Caco-2 (cell line): ENCODE measurements at regions of chr15 and their contacts with region 1.

Region 1: DNA sequence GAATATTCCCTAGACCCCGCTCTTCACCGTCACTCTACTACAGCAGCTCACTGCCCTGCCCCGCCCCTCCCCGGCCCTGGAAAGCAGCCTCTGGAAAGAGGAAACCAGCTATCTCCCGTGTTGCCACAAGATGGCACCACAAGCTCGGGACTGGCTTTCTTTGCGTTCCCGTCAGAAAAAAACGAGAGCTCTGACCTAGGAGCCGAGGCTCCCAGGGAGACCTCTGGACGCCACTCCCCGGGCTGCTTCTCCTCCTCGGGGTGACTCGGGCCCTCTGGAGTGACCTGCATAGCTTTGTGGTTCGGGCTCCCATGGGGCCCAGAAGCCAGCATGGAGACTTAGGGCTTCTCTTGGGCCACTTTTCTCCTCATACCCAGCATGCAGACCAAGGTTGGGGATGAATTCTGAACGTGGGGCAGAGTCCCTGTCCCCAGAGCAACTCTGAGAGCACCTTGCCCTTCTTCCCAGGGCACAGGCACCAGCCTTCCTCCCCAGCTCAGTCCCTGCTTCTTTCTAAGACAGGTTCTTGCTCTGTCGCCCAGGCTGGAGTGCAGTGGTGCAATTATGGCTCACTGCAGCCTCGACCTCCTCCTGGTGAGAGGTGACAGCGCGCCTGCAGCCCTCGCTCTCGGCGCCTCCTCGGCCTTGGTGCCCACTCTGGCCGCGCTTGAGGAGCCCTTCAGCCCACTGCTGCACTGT is 19.0 kb downstream of the STOML1 start:
- DNase-seq: peak; percentile 82 to 87
- H3K4me3 ChIP-seq: no peak overlapping the region
- H3K4me3 Mint-ChIP-seq: peak overlapping the region; percentile 54
- H3K27ac Mint-ChIP-seq: peak overlapping the region; percentile 17
- H3K4me1 ChIP-seq: no peaks in the 10 kb centered on the region
- H3K4me1 Mint-ChIP-seq: peaks cover 8% of the 10 kb centered on the region
- H3K27me3 ChIP-seq: no peaks in the 10 kb centered on the region
- H3K27me3 Mint-ChIP-seq: peaks cover 19% of the 10 kb centered on the region
- CTCF ChIP-seq: peak; percentile 60 to 89

Region 2: GRCh38 chr15:73950831-73951561 is 22.1 kb before region 1 on chr15:
- CTCF ChIA-PET with region 1: interaction called, 32 read pairs
- POLR2A ChIA-PET with region 1: no interaction called
- intact Hi-C with region 1: no loop called
- DNase-seq: peak; percentile 80 to 84
- H3K4me3 ChIP-seq: no peak overlapping the region
- H3K4me3 Mint-ChIP-seq: no peak overlapping the region
- H3K27ac Mint-ChIP-seq: no peak overlapping the region
- H3K4me1 ChIP-seq: no peaks in the 10 kb centered on the region
- H3K4me1 Mint-ChIP-seq: peaks cover 6% of the 10 kb centered on the region
- H3K27me3 ChIP-seq: no peaks in the 10 kb centered on the region
- H3K27me3 Mint-ChIP-seq: no peaks in the 10 kb centered on the region
- CTCF ChIP-seq: peak; percentile 59 to 86

Region 3: DNA sequence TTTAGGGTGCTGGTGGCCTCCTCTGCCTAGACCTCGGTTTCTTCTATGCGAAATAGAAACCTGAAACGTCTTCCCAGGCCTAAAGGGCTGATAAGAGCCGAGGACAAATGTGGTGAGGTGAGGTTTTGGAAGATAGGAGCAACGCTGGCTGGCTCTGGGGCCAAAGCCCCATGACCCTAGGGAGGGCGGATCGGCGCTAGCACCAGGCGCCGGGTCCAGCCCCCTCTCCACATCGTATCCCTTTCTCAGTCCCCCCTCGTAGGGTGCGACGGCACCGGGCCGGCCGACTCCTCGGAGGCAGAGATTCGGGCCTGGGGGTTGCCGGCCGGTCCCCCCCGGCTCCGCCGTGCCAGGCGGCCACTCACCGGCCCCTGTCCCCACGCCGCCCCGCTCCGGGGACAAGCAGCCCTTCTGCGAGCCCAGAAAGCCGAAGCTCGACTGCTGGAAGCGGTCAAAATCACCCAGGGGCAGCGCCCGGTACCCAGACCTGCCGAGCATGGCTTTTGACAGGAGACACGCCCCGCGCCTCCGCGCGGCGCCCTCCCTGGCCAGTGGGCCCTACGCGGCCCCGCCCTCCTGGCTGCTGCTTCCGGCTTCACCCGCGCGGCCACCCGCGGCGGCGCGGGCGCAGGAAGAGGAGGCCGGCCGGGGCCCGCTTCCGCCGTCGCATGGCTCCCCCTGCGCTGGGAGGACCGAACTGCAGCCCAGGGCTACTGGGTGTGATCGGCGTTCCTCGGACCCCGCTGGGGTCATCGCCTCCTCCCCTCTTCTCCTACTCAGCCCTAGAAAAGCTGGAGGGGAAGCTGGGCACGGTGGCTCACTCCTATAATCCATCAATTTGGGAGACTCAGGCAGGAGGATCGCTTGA is 18.8 kb after region 1 on chr15 and contains the start of gene STOML1:
- CTCF ChIA-PET with region 1: interaction called, 33 read pairs
- POLR2A ChIA-PET with region 1: interaction called, 6 read pairs
- intact Hi-C with region 1: no loop called
- DNase-seq: peak; percentile 89 to 95
- H3K4me3 ChIP-seq: peak within 1 kb of the TSS; percentile 61
- H3K4me3 Mint-ChIP-seq: peak within 1 kb of the TSS; percentile 72
- H3K27ac Mint-ChIP-seq: no peak within 1 kb of the TSS
- H3K4me1 ChIP-seq: peaks cover 4% of the 10 kb centered on the region; the same call in 1 of the 2 replicates
- H3K4me1 Mint-ChIP-seq: peaks cover 18% of the 10 kb centered on the region
- H3K27me3 ChIP-seq: no peaks in the 10 kb centered on the region
- H3K27me3 Mint-ChIP-seq: no peaks in the 10 kb centered on the region
- CTCF ChIP-seq: peak; percentile 73 to 88
- total RNA-seq, gene STOML1: 7.6 TPM in 2 replicates

Region 4: DNA sequence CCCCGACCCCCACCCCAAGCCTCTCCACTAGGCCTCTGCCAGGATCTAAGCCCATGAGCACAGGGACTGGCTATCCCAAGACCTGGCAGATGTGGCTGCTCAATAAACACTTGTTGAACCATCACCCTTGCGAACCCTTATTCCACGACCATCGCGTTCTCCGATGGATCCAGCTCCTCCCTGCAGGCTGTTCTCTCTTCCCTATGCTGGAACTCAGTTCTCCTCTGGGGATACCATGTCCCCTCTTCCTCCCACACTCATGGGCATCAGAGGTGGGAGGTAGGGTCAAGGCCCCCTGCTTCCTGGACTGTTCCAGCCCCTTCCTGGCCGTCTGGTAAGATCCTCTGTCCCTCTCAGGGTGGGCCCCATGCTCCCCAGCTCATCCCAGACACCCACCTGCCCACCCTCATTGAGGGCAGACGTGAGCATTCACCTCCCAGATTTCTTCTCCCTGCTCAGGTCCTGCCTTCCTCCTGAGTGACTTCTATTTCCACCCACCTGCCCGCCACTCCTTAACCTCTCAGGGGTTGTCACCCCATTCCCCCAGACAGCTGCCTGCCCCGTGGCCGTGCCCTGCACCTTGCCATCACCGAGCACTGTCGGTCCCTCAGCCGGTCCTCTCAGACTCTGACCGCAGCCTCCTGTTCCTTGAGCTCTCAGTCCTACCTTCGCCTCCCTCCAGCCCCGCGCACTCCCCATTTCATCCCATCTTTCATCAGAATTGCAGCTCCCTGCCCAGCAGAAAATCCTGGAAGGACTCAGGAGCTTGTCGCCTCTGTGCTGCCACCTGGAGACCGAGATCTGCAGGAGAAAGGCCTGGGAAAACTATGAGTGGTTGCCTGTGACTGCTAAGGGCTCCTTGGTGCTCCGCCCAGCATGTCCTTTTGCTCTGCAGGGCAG is 63.4 kb after region 1 on chr15:
- CTCF ChIA-PET with region 1: interaction called, 194 read pairs
- POLR2A ChIA-PET with region 1: no interaction called
- intact Hi-C with region 1: loop called (anchors 1 kb)
- DNase-seq: peak; percentile 72 to 74
- H3K4me3 ChIP-seq: no peak overlapping the region
- H3K4me3 Mint-ChIP-seq: no peak overlapping the region
- H3K27ac Mint-ChIP-seq: no peak overlapping the region
- H3K4me1 ChIP-seq: no peaks in the 10 kb centered on the region
- H3K4me1 Mint-ChIP-seq: no peaks in the 10 kb centered on the region
- H3K27me3 ChIP-seq: no peaks in the 10 kb centered on the region
- H3K27me3 Mint-ChIP-seq: no peaks in the 10 kb centered on the region
- CTCF ChIP-seq: peak; percentile 60 to 82

Region 5: DNA sequence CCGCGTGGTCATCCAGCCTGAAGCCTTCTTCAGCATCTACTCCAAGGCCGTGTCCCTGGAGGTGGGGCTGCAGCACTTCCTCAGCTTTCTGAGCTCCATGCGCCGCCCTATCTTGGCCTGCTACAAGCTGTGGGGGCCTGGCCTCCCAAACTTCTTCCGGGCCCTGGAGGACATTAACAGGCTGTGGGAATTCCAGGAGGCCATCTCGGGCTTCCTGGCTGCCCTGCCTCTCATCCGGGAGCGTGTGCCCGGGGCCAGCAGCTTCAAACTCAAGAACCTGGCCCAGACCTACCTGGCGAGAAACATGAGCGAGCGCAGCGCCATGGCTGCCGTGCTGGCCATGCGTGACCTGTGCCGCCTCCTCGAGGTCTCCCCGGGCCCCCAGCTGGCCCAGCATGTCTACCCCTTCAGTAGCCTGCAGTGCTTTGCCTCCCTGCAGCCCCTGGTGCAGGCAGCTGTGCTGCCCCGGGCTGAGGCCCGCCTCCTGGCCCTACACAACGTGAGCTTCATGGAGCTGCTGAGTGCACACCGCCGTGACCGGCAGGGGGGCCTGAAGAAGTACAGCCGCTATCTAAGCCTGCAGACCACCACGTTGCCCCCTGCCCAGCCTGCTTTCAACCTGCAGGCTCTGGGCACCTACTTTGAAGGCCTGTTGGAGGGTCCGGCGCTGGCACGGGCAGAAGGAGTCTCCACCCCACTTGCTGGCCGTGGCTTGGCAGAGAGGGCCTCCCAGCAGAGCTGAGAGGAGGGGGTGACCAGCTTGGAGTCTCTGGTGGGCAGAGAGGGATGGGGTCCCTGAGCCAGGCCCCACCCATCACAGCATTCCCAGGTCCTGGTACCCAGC is 71.4 kb after region 1 on chr15:
- CTCF ChIA-PET with region 1: interaction called, 194 read pairs
- POLR2A ChIA-PET with region 1: no interaction called
- intact Hi-C with region 1: no loop called
- DNase-seq: no peak
- H3K4me3 ChIP-seq: no peak overlapping the region
- H3K4me3 Mint-ChIP-seq: no peak overlapping the region
- H3K27ac Mint-ChIP-seq: no peak overlapping the region
- H3K4me1 ChIP-seq: no peaks in the 10 kb centered on the region
- H3K4me1 Mint-ChIP-seq: no peaks in the 10 kb centered on the region
- H3K27me3 ChIP-seq: no peaks in the 10 kb centered on the region
- H3K27me3 Mint-ChIP-seq: peaks cover 8% of the 10 kb centered on the region
- CTCF ChIP-seq: no peak

Region 6: DNA sequence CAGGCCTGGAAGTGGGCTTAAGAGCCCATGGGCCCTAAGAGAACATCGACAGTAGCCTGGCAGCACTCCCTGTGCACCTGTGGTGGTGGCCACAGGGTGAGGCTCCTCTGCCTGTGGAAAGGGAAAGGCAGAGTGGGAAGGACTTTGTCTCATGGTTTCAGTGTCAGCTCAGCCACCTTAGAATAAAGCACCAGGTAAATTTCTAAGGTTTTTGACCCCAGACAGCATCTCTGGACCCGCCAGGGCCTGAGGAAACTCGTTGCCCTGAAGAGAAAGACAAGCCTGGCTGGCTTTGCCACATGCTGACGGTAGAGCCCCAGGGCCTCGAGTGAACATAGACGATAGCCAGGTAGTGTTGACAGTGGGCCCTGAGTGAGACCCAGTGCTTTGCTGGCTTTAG is 87.1 kb after region 1 on chr15:
- CTCF ChIA-PET with region 1: no interaction called
- POLR2A ChIA-PET with region 1: no interaction called
- intact Hi-C with region 1: no loop called
- DNase-seq: no peak
- H3K4me3 ChIP-seq: no peak overlapping the region
- H3K4me3 Mint-ChIP-seq: no peak overlapping the region
- H3K27ac Mint-ChIP-seq: no peak overlapping the region
- H3K4me1 ChIP-seq: no peaks in the 10 kb centered on the region
- H3K4me1 Mint-ChIP-seq: no peaks in the 10 kb centered on the region
- H3K27me3 ChIP-seq: no peaks in the 10 kb centered on the region
- H3K27me3 Mint-ChIP-seq: peaks cover 26% of the 10 kb centered on the region
- CTCF ChIP-seq: no peak

Region 7: DNA sequence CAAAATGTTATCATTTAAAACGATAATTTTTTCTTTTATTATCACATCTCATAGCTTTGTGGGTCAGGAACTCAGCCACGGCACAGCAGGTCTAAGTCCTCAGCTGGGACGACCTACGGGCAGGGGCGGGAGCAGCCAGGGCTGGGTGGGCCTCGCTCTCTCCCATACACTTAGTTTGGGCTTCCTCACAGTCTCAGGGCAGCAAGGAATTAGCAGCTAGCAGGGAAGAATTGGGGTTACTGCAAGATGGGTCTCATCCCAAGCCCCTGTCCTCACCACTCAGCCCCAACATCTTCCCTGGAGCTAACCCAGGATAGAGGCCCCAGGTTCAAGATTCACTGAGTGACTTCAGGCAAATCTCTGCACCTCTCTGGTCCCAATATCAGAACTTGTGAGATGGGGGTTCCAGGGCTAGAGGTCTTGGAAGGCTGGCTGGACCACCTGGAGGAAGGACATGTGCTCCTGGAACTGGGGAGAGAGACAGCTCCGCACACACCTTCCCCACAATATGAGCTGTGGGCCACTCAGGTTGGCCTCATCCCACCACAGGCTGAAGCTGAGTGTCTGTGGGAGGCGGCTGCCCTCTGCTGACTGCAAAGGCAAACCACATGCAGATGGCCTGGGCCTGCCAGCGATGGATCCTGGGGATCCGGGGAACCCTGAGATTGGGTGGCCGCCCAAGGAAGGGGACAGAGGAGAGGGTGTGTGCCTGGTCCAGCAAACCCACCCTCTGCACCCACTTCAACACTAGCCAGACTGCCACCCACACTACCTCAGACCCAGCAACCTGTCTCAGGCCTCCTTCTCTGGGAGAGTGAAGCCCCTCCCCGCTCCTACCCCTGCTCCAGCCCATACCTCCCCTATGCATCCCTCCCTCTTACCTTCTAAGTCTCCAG is 349.3 kb after region 1 on chr15:
- CTCF ChIA-PET with region 1: interaction called, 9 read pairs
- POLR2A ChIA-PET with region 1: no interaction called
- intact Hi-C with region 1: loop called (anchors 5 kb)
- DNase-seq: peak; percentile 68 to 75
- H3K4me3 ChIP-seq: no peak overlapping the region
- H3K4me3 Mint-ChIP-seq: no peak overlapping the region
- H3K27ac Mint-ChIP-seq: no peak overlapping the region
- H3K4me1 ChIP-seq: no peaks in the 10 kb centered on the region
- H3K4me1 Mint-ChIP-seq: no peaks in the 10 kb centered on the region
- H3K27me3 ChIP-seq: no peaks in the 10 kb centered on the region
- H3K27me3 Mint-ChIP-seq: peaks cover 5% of the 10 kb centered on the region
- CTCF ChIP-seq: peak; percentile 77 to 86